Right ventricle myocardium superior (tissue), 1 donor: ENCODE measurements at regions of chr3 and their contacts with region 1.

Region 1: DNA sequence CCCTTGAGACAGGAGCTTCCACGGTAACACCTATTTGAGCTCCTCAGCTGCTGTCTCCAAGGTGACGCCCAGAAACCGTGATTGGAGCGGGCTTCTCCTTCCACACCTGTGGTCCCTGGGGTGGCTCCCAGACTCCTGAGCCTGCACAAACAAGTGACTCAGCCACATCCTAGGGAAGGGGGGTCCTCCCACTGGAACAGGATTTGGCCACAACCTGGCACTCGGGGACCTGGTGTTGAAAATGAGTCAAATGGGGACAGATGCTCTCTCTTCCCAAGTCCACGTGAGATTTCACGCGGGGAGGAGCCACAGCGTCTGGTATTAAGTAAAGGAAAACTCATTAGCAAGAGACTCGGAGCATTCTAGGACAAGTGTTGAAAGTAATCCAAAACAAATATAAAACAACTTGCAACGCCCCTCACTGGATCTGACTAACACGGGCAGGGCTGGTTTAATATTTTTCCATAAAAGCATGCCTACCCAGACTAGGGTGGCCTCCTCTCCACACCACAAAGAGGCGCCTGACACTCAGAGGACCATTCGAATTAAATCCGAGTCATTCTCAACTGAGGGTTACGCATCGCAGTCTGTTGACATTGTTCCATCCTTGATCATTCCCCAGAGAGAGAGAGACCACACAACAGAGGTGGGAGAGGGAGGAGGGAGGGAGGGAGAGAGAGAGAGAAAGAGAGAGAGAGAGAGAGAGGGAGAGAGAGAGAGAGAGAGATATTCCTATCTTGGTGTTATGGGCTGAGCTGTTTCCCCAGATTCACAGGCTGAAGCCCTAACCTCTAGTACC is 74.4 kb downstream of the MGLL start:
- DNase-seq: peak; percentile 86
- ATAC-seq: peak; percentile 68

Region 2: GRCh38 chr3:127406309-127407025 is 341.5 kb before region 1 on chr3:
- intact Hi-C with region 1: no loop called
- DNase-seq: no peak
- ATAC-seq: no peak

Region 3: GRCh38 chr3:127697551-127698240 is 50.2 kb before region 1 on chr3:
- intact Hi-C with region 1: loop called (anchors 5 kb)
- DNase-seq: peak; percentile 93
- ATAC-seq: peak; percentile 77

Region 4: DNA sequence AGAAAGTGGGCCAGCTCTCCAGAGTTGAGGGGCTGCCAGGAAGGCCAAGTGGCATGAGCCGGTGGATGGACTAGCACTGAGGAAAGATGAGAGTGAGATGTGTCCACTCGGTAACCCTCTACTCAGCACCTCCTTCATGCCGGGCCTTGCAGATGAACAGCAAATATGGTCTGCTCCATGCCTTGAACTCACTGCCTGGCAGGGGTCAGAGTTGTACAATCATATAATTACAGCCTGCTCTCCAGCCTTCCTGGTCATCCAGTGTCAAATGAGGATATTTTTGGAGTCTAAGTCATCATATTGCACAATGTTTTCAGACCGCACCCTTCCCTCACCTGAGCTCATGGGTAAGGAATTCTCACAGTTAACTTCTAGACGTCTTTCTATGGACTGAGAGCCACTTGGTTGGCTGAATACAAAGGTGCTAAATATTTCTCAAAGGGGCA is 69.5 kb after region 1 on chr3:
- intact Hi-C with region 1: loop called (anchors 10 kb)
- DNase-seq: no peak
- ATAC-seq: peak; percentile 20